ENCODE measurements at regions of chr11 and their contacts with region 1.

Region 1: DNA sequence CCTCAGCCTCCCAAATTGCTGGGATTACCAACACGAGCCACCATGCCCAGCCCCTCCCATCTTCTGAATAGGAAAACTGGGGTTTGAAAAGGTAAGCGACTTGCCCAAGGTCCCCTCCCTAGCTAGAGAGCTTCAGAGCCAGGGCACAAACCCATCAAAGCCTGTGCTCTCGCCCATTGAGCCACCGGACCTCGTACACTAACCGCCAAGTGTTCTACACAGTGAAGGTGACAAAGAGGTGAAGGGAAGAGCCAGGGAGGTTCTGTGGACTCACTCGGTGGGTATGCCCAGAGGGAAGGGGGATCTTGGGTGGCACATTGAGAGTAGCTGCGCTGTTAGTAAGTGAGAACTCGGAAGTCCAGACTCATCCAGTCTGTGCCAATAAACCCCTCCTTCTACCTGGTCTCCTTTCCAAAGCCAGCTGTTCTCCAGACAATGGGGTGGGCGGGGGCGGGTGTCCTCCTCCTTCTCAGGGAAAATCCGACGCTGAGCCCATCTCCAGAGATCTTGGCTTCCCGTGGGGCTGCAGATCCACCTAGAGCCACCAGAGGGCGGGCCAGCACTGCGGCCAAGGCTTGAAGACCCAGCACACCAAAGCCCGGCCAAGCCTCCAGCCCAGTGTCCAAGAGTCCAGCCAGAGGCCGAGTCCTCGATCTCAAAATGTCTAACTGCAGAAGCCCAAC is 3.2 kb upstream of the RTN4RL2 start:
- DNase-seq: peak; percentile 76
- ATAC-seq: peak; percentile 76
- H3K4me3 Mint-ChIP-seq: peak overlapping the region; percentile 70
- H3K27ac Mint-ChIP-seq: no peak overlapping the region
- H3K4me1 Mint-ChIP-seq: peaks cover 28% of the 10 kb centered on the region
- H3K27me3 Mint-ChIP-seq: peaks cover 28% of the 10 kb centered on the region
- CTCF ChIP-seq: peak; percentile 93

Region 2: GRCh38 chr11:57406337-57406904 is 50.7 kb before region 1 on chr11:
- CTCF ChIA-PET with region 1: interaction called, 4 read pairs
- POLR2A ChIA-PET with region 1: interaction called, 3 read pairs
- intact Hi-C with region 1: loop called (anchors 1 kb)
- DNase-seq: no peak
- ATAC-seq: peak; percentile 80
- H3K4me3 Mint-ChIP-seq: peak overlapping the region; percentile 40
- H3K27ac Mint-ChIP-seq: peak overlapping the region; percentile 88
- H3K4me1 Mint-ChIP-seq: peaks cover 50% of the 10 kb centered on the region
- H3K27me3 Mint-ChIP-seq: no peaks in the 10 kb centered on the region
- CTCF ChIP-seq: no peak

Region 3: DNA sequence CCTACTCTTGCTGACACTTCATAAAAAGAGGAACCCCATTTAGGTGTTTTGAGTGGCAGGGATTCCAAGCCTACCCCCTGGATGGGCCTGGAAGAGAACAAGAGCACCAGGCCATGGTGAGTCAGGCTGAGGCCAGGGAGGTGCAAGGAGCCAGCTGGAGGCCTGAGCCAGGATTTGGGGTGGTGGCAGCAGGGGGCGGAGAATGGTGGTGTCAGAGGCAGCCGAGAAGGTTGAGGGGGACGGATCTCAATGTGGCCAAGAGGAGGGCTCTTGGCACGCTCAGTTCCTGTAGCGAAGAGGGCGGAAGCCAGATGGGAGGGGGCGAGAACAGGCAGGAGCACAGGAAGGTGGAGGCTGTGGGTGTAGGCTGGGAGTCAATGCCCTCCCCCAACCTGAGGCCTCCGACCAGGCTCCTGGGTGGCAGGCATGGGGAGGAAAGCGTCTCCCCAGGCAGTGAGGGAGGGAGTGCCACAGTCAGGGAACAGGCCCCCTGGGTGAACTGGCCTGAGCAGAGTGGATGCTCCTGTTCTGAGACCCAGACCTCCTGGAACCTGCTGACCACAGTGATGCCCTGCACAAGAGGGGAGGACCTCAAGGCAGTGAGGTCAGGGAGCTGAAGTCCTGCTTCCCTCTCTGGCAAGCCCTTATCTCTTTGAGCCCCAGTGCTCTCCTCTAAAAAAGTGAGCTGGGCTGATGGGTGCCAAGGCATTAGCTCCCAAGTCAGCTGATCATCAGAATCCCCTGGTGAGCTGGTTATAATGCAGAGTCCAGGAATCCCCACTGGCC is 17.1 kb after region 1 on chr11:
- CTCF ChIA-PET with region 1: interaction called, 191 read pairs
- POLR2A ChIA-PET with region 1: interaction called, 12 read pairs
- intact Hi-C with region 1: loop called (anchors 1 kb)
- DNase-seq: no peak
- ATAC-seq: no peak
- H3K4me3 Mint-ChIP-seq: peak overlapping the region; percentile 50
- H3K27ac Mint-ChIP-seq: no peak overlapping the region
- H3K4me1 Mint-ChIP-seq: peaks cover 27% of the 10 kb centered on the region
- H3K27me3 Mint-ChIP-seq: peaks cover 9% of the 10 kb centered on the region
- CTCF ChIP-seq: no peak

Region 4: DNA sequence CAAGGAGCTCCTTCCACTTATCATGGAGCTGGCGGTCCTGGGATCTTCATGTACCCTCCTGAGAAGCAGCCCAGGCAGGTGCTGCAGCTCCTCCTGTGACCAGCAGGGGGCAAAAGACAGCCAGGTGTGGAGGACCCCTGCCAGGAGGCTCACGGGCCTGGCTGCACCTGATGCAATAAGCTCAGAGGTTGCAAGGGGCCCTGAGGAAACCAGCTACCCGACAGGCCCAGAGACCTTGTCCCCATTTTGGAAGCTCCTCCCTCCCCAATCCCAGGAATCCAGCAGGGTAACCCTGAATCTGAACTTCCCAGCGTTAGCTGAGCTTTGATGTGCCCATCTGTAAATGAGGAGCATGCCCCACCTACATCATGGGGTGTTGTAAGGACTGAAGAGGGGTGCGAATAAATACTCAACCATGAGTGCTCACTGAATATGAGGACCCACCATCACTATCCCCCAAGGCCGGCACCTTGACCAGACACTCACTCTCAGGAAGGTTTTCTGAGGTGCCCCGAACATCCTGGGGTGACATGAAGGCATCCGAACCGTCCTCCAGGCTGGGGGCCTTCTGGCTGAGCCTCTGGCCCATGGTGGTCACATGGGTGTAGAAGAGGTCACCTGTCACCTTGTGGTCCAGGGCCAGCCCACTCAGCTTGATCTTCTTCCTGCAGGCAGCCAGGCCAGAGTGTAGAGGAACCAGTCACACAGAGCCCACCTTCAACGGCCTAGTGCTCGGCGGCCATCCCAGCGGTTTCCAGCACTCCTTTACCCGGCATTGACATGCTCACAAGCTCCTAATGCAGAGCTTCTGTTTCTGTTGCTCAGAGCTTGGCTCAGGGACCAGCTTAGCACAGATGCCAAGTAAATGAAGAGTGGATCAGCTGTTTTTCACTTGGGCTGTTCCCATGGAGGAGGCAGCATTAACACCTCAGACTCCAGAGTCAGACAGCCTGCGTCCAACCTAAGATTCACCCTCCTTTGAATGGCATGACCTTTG is 36.7 kb after region 1 on chr11:
- CTCF ChIA-PET with region 1: interaction called, 35 read pairs
- POLR2A ChIA-PET with region 1: interaction called, 4 read pairs
- intact Hi-C with region 1: loop called (anchors 1 kb)
- DNase-seq: peak; percentile 64
- ATAC-seq: peak; percentile 96
- H3K4me3 Mint-ChIP-seq: no peak overlapping the region
- H3K27ac Mint-ChIP-seq: peak overlapping the region; percentile 76
- H3K4me1 Mint-ChIP-seq: peaks cover 7% of the 10 kb centered on the region
- H3K27me3 Mint-ChIP-seq: no peaks in the 10 kb centered on the region
- CTCF ChIP-seq: peak; percentile 30

Region 5: GRCh38 chr11:57644748-57645688 is 187.9 kb after region 1 on chr11:
- CTCF ChIA-PET with region 1: interaction called, 56 read pairs
- POLR2A ChIA-PET with region 1: interaction called, 3 read pairs
- intact Hi-C with region 1: loop called (anchors 1 kb)
- DNase-seq: peak; percentile 65
- ATAC-seq: peak; percentile 82
- H3K4me3 Mint-ChIP-seq: no peak overlapping the region
- H3K27ac Mint-ChIP-seq: no peak overlapping the region
- H3K4me1 Mint-ChIP-seq: peaks cover 40% of the 10 kb centered on the region
- H3K27me3 Mint-ChIP-seq: peaks cover 58% of the 10 kb centered on the region
- CTCF ChIP-seq: no peak

Measured in activated B cell treated with CpG ODN at 0.5 μM for 24 hours (primary cell).